RWPE1 (cell line): ENCODE measurements at regions of chr2 and their contacts with region 1.

Region 1: DNA sequence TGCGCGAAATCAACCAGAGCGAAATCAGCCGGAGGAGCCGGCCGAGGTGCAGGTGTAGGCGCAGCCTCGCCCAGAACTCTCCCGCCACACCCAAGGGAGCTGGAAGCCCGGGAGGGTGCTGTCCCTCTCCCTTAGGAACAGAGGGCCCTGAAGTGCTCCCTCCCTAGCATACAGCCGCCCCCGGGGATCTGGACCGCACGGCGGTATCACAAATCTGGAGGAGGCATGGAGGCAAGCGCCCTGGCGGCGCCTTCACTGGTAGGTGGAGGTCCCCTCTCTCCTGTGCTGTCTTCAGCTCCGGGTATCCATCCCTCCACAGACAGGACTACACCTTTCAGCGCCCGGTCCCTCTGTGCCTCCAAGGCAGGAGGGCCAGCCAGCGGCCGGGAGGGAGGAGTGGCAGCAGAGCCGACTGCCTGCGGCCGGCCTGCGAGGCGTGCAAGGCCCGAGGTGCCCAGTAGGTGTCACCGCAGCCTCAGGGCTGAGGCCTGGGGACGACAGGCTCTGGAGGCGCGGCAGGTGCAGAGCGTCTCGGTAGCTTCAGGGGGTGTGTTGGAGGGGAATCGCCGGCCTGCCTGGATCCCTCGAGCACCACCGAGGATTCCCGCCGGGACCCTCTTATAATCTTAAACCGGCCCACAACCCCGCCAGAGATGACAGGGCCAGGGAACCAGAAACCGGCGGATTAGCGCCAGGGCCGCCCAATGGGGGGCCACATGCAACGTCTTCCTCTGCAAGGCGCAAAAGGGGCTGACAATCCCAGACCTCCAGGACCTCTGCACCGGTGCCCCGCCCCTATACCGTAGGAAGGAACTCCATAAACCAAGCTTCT is 2.8 kb downstream of the IHH start:
- DNase-seq: peak; percentile 59
- H3K27ac ChIP-seq: no peak overlapping the region
- CTCF ChIP-seq: peak; percentile 89

Region 2: GRCh38 chr2:219029829-219030165 is 28.1 kb before region 1 on chr2:
- CTCF ChIA-PET with region 1: interaction called, 11 read pairs
- POLR2A ChIA-PET with region 1: no interaction called
- DNase-seq: peak; percentile 84
- H3K27ac ChIP-seq: no peak overlapping the region
- CTCF ChIP-seq: peak; percentile 93

Region 3: DNA sequence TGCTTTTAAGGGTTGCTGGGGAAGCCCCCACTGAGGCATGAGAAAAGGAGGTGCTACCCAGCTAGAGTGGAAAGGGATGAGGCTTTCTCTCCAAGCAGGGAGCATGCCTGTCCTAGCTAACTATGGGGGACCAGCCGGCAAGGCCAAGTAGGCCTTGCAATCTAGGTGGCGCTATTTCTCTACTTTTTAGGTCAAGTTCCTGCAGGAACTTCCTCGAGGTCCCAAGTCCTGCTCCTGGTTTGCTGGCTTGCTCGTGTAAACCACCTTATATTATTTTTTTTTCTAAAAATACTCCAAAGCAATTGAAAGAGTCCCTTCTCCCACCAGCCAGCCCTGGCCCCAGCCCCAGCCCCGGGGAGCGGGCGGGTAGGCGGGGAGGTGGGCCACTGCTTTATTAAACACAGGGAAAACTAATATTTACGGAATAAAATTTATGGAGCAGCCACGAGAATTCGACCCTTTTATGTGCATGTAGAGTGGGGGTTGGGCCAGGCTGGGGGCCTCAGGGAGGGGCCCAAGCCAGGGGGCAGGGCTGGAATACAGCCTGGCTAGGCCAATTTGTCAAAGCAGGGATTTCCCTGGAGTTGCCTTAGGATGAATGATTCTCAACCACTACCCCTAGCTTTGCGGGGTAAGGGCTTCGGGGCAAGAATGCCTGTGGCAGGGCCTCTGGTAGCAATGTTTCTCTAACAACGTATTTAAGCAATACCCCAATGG is 15.6 kb after region 1 on chr2:
- CTCF ChIA-PET with region 1: interaction called, 13 read pairs
- POLR2A ChIA-PET with region 1: no interaction called
- DNase-seq: no peak
- H3K27ac ChIP-seq: no peak overlapping the region
- CTCF ChIP-seq: no peak; the same call in 1 of the 2 replicates

Region 4: GRCh38 chr2:219119422-219120043 is 61.6 kb after region 1 on chr2:
- CTCF ChIA-PET with region 1: interaction called, 27 read pairs
- POLR2A ChIA-PET with region 1: no interaction called
- DNase-seq: peak; percentile 54
- H3K27ac ChIP-seq: no peak overlapping the region
- CTCF ChIP-seq: peak; percentile 77

Region 5: DNA sequence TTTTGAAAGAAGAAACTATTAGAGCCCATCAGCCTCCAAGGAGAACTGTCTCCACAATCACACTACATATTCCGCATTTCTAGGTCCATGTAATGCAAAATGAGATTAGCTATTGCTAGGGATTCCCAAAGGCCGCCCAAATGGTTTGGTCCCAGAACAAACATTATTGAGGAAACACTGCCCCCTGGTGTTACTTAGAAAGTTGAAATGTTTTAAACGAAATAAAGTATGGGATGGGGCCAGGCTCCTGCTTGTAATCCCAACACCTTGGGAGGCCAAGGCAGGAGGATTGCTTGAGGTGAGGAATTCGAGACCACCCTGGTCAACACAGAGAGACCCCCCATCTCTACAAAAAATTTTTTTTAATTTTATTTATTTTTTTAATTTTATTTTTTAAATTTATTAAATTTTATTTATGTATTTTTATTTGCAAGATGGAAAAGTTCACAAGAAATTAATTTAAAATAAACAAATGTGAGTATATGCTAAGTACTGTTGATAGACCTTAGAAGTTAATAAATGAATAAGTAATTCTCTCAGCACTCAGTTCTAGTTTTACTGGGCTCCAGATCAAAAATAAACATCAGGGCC is 97.2 kb after region 1 on chr2:
- CTCF ChIA-PET with region 1: interaction called, 32 read pairs
- POLR2A ChIA-PET with region 1: no interaction called
- DNase-seq: peak; percentile 62
- H3K27ac ChIP-seq: no peak overlapping the region
- CTCF ChIP-seq: peak; percentile 33; the same call in 1 of the 2 replicates